ENCODE measurements at regions of chr18 and their contacts with region 1.

Region 1: DNA sequence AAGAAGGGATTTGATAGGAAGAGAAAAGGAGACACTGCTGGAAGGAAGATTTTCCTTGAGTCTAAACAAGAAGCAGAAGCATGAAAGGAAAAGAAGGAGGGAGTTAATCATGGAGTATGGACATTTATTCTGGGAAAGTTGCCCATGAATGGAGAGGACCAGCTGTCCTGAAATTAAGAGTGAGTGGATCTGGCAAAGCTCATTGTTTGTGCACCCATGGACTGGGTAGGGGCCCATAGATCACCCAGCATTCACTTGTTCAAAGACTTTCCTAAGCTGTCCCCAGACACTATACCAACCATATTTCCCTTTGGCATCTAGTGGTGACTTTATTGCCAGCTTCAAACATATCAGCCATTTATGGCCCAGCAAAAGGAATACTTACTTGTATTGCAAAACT is 422.7 kb downstream of the FBXO15 start:
- DNase-seq: no peak
- H3K4me3 ChIP-seq: no peak overlapping the region
- H3K27ac ChIP-seq: no peak overlapping the region
- H3K4me1 ChIP-seq: no peaks in the 10 kb centered on the region
- H3K27me3 ChIP-seq: no peaks in the 10 kb centered on the region
- CTCF ChIP-seq: no peak
- POLR2A ChIP-seq: no peak

Region 2: DNA sequence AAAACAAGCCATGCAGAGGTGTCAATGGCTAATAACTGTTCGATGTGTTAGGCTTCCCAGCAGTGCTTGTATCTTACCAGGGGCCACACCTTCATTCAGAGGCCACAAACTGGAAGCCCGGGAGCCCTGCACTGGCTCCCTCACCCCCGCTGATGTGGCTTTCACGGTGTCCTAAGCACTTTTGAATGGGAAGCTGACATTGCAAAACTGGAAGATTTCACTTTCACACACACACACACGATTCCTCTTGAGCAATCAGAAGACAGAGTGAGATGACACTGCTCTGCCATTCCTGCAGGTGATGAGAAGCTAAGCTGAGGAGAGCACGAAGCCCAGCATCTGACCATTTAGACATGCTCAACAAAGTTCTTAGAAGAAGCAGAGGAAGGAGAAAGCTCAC is 864.1 kb after region 1 on chr18:
- intact Hi-C with region 1: loop called (anchors 10 kb)
- DNase-seq: no peak
- H3K4me3 ChIP-seq: no peak overlapping the region
- H3K27ac ChIP-seq: no peak overlapping the region
- H3K4me1 ChIP-seq: no peaks in the 10 kb centered on the region
- H3K27me3 ChIP-seq: no peaks in the 10 kb centered on the region
- CTCF ChIP-seq: no peak
- POLR2A ChIP-seq: no peak

Measured in testis (tissue), 5 donors.